Caco-2 (cell line): ENCODE measurements at regions of chr4 and their contacts with region 1.

Region 1: DNA sequence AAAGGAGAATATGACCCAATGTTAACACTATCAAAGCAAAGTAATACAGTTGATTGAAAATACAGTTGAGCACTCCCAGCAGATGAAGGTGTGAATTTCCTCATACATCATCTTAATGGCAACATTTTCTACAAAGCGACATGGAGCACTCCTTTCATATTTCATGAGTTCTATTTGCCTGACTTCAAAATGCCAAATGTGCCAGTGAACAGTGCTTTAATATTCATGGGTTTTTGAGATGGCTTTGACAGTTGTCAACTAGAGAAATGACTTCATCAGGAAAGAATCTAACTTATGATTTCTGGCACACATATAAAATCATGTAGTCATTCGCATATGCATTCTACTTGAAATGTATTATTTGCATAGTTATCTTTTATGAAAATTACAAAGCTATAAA is 222.4 kb downstream of the GALNTL6 start:
- DNase-seq: no peak
- H3K4me3 ChIP-seq: no peak overlapping the region
- H3K4me3 Mint-ChIP-seq: no peak overlapping the region
- H3K27ac Mint-ChIP-seq: no peak overlapping the region
- H3K4me1 ChIP-seq: no peaks in the 10 kb centered on the region
- H3K4me1 Mint-ChIP-seq: no peaks in the 10 kb centered on the region
- H3K27me3 ChIP-seq: no peaks in the 10 kb centered on the region
- H3K27me3 Mint-ChIP-seq: no peaks in the 10 kb centered on the region
- CTCF ChIP-seq: no peak

Region 2: DNA sequence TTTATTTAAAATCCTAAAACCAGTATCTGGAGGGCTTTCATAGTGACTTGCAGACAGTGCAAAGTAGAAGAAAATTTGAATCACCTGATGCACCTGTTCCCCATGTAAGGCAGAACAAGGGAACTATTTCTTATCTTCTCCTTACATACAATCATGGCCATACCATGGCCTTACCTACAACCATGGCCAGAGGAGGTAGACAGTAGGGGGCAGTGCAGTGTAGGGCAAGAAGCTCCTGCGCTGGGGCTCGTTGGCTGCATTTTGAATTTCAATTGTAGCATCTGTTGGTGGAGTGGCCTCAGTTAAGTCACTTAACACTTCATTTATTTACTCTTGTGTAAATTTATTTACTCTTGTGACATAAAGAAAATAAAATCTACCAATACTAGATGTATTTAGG is 189.3 kb before region 1 on chr4:
- CTCF ChIA-PET with region 1: no interaction called
- POLR2A ChIA-PET with region 1: no interaction called
- intact Hi-C with region 1: loop called (anchors 1 kb)
- DNase-seq: peak; percentile 55 to 65
- H3K4me3 ChIP-seq: no peak overlapping the region
- H3K4me3 Mint-ChIP-seq: no peak overlapping the region
- H3K27ac Mint-ChIP-seq: no peak overlapping the region
- H3K4me1 ChIP-seq: no peaks in the 10 kb centered on the region
- H3K4me1 Mint-ChIP-seq: no peaks in the 10 kb centered on the region
- H3K27me3 ChIP-seq: no peaks in the 10 kb centered on the region
- H3K27me3 Mint-ChIP-seq: no peaks in the 10 kb centered on the region
- CTCF ChIP-seq: peak; percentile 50 to 54

Region 3: GRCh38 chr4:171929907-171930306 is 105.7 kb before region 1 on chr4:
- CTCF ChIA-PET with region 1: no interaction called
- POLR2A ChIA-PET with region 1: no interaction called
- intact Hi-C with region 1: loop called (anchors 10 kb)
- DNase-seq: peak in 1 of 2 experiments; percentile 24
- H3K4me3 ChIP-seq: no peak overlapping the region
- H3K4me3 Mint-ChIP-seq: no peak overlapping the region
- H3K27ac Mint-ChIP-seq: no peak overlapping the region
- H3K4me1 ChIP-seq: no peaks in the 10 kb centered on the region
- H3K4me1 Mint-ChIP-seq: no peaks in the 10 kb centered on the region
- H3K27me3 ChIP-seq: no peaks in the 10 kb centered on the region
- H3K27me3 Mint-ChIP-seq: peaks cover 3% of the 10 kb centered on the region
- CTCF ChIP-seq: no peak

Region 4: DNA sequence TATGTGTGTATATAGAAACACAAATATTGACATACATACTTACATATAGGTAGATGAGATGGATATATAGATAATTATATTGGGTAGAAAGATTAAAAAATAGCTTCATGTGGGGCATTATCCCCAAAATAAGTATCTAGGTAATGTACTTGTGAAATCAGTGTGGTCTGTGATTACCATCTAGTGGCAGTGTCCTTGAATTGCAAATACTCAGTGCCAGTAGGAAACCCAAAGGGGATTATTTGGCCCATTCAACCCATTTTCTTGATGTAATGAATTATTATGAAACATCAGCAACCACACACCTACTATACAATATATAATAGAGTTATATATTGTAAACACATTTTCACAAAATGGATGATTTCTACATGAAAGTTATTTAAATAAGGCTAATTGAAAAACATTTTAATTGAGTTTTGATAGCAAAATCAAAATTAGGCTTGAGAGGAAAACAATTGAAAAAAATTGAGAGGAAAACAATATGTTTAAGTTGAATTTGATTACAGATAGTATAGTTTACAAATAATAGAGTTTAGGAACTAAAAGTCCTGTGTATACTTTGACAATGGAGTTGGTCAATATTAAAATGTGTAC is 167.0 kb after region 1 on chr4:
- CTCF ChIA-PET with region 1: no interaction called
- POLR2A ChIA-PET with region 1: no interaction called
- intact Hi-C with region 1: loop called (anchors 1 kb)
- DNase-seq: peak in 1 of 2 experiments; percentile 22
- H3K4me3 ChIP-seq: no peak overlapping the region
- H3K4me3 Mint-ChIP-seq: no peak overlapping the region
- H3K27ac Mint-ChIP-seq: no peak overlapping the region
- H3K4me1 ChIP-seq: no peaks in the 10 kb centered on the region
- H3K4me1 Mint-ChIP-seq: peaks cover 7% of the 10 kb centered on the region
- H3K27me3 ChIP-seq: no peaks in the 10 kb centered on the region
- H3K27me3 Mint-ChIP-seq: no peaks in the 10 kb centered on the region
- CTCF ChIP-seq: peak; percentile 42 to 43